ENCODE measurements at regions of chr1 and their contacts with region 1.

Region 1: GRCh38 chr1:19715334-19716203 is 50.9 kb downstream of the HTR6 start:
- DNase-seq: peak; percentile 83
- CTCF ChIP-seq: peak; percentile 79

Region 2: GRCh38 chr1:19728413-19729145 is 13.0 kb after region 1 on chr1:
- CTCF ChIA-PET with region 1: interaction called, 33 read pairs
- POLR2A ChIA-PET with region 1: no interaction called
- DNase-seq: no peak
- CTCF ChIP-seq: no peak

Region 3: DNA sequence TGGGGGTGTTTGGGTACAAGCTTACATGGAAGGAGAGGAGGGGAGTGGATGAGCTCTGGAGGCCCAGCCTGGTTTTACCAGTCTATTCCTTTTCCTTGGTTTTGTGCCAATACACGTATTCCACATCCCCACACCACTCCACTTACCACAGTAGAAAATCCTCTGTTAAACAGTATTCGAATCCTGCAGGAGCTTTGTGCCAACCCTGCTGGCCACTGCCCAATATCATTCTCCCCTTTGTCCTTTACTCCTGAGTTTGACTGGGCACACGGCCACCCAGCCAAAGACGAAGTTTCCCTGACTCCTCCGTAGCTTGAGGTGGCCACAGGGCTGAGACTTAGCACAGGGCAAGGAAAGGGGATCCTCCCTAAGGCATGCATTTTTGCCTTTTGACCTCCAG is 22.5 kb after region 1 on chr1:
- CTCF ChIA-PET with region 1: interaction called, 10 read pairs
- POLR2A ChIA-PET with region 1: no interaction called
- DNase-seq: no peak
- CTCF ChIP-seq: no peak